ENCODE measurements at regions of chr5 and their contacts with region 1.

Region 1: DNA sequence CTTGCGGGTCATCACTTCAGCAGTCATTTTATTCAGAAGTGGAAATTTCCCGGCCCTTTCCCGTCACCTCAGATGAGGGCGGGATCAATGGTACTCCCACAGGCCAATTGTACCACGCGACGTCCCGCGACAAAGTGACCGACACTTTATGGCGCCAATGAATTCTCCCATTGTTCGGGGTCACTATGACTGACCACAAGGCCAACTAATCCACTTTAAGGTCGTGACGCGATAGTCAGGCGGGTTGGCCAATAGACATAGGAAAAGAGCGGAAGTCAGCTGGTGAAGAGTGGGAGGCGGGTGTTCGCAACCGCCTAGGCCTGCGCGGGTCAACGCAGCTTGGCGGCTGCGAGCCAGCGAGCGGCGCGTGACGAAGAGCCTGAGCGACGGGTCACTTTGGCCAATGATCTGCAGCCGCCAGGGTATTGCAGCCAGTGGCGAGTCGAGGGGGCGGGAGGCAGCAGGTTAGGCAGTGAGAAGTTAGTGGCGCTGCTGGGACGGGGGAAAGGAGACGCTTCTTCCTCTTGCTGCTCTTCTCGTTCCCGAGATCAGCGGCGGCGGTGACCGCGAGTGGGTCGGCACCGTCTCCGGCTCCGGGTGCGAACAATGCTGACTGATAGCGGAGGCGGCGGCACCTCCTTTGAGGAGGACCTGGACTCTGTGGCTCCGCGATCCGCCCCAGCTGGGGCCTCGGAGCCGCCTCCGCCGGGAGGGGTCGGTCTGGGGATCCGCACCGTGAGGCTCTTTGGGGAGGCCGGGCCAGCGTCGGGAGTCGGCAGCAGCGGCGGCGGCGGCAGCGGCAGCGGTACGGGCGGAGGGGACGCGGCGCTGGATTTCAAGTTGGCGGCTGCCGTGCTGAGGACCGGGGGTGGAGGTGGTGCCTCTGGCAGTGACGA is at the start of gene ANKHD1:
- DNase-seq: peak; percentile 99
- H3K4me3 Mint-ChIP-seq: no peak within 1 kb of the TSS
- H3K27ac Mint-ChIP-seq: no peak within 1 kb of the TSS
- H3K4me1 Mint-ChIP-seq: peaks cover 37% of the 10 kb centered on the region
- H3K27me3 Mint-ChIP-seq: no peaks in the 10 kb centered on the region
- total RNA-seq, gene ANKHD1: 83.2 to 87.0 TPM

Region 2: DNA sequence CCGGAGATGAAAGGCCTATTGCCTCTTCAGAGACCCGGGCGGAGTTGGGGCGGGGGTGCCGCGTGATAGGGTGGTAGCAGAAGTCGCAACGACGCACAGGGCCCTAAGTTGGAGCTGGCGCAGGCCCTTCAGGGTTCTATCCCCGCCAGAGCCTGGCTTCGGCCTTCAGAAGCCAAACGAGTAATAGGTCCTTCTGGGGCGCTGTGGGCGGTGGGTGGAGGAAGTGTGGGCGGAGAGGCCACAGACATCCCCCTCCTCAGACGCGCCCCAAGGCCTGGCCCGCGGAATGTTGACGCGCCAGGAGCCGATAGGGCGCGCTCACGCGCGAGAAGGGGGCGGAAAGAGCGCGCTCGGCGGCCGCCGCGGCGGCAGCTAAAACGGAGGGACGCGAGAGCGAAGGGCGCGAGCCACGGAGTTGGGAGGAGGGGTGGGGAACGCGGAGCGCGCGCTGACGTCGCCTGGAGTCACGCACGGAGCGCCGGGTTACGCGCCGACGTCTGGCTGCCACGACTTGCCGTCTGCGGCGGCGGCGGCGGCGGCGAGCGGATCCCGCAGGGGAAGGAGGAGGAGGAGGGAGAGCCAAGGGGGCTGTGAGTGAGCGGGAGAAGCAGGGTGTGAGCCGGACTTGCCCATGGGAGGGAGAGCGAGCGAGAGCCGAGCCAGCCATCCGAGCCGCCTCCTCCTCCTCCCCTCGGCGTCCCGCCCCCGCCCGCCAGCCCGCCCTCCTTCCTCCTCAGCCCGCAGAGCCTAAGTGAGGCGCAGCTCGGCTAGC is 294.1 kb before region 1 on chr5:
- CTCF ChIA-PET with region 1: no interaction called
- intact Hi-C with region 1: loop called (anchors 5 kb)
- DNase-seq: peak; percentile 91
- H3K4me3 Mint-ChIP-seq: peak overlapping the region; percentile 98
- H3K27ac Mint-ChIP-seq: peak overlapping the region; percentile 91
- H3K4me1 Mint-ChIP-seq: peaks cover 39% of the 10 kb centered on the region
- H3K27me3 Mint-ChIP-seq: no peaks in the 10 kb centered on the region

Region 3: DNA sequence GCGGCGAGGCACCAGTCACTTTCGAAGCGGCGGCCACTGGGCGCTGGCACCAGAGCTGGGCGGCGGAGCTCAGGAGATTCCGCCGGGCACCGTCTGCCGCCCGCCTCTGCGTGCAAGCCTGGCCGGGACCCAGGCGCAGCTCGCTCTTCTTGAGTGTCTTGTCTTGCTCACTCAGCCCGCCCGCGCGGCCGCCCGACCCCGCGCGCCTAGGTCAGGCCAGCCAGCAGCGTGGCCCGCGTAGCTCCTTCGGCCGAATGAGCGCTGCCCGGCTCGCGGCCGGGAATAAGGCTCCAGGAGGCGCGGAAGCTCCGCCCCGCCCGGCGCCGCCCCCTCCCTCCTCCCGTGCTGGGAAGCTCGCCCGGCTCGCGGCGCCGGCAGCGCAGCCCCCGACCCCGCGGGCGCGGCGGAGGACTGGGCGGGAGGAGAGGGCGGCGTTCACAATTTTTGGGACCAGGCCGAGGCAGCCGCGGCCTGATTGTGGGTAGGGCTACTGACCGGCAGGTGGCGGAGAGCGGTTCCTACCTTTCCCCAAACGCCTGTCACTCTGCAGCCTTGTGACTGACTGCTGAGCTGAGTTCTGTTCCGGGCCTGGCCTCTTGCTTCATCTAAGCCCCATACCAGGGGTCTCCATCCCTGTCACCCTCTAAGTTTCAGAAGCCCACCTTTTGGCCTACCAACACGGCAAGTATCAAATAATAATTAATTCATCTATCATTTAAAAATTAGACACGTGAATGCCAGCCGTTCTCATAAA is 55.1 kb before region 1 on chr5 and contains the start of gene HBEGF:
- CTCF ChIA-PET with region 1: no interaction called
- intact Hi-C with region 1: loop called (anchors 1 kb)
- DNase-seq: peak; percentile 61
- H3K4me3 Mint-ChIP-seq: peak within 1 kb of the TSS; percentile 75
- H3K27ac Mint-ChIP-seq: peak within 1 kb of the TSS; percentile 41
- H3K4me1 Mint-ChIP-seq: peaks cover 41% of the 10 kb centered on the region
- H3K27me3 Mint-ChIP-seq: peaks cover 7% of the 10 kb centered on the region
- total RNA-seq, gene HBEGF: 8.7 to 9.1 TPM

Region 4: DNA sequence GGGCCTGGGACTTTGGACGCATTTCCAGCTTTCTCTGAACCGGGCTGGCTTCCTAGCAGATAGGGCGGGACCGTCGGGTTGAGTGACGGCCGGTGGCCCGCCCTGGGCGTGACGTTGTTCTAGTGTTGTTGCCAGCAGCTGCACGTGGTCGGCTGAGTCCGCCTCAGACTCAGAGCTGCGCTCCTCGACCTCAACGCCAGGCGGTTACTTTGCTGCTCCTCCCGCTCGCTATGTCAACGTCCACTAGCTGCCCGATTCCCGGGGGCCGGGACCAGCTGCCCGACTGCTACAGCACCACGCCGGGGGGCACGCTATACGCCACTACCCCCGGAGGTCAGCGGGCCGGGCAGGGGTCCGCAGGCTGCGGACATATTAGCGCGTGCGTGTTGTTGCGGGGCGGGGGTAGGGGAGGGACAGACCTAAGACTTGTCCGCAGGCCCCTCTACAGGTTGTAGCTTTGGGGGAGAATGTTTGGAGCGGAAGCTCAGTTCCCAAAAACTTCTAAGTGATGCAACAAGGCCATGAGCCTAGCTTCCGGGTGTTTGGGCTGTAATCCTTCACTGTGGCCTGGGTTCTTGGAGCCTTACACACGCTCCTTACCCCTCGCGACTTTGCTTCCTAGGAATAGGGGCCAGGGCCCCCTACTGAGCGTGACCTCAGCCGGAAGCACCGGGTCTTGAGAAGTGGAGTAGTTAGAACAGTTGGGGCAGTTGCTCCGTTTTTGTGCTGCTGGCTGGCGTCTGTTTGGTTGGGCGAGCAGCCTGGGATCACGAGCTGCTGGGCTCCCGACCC is 146.1 kb after region 1 on chr5 and contains the start of gene EIF4EBP3:
- CTCF ChIA-PET with region 1: interaction called, 3 read pairs
- intact Hi-C with region 1: loop called (anchors 1 kb)
- DNase-seq: peak; percentile 93
- H3K4me3 Mint-ChIP-seq: peak within 1 kb of the TSS; percentile 87
- H3K27ac Mint-ChIP-seq: peak within 1 kb of the TSS; percentile 94
- H3K4me1 Mint-ChIP-seq: peaks cover 42% of the 10 kb centered on the region
- H3K27me3 Mint-ChIP-seq: no peaks in the 10 kb centered on the region
- total RNA-seq, gene EIF4EBP3: 27.2 to 28.5 TPM

Region 5: DNA sequence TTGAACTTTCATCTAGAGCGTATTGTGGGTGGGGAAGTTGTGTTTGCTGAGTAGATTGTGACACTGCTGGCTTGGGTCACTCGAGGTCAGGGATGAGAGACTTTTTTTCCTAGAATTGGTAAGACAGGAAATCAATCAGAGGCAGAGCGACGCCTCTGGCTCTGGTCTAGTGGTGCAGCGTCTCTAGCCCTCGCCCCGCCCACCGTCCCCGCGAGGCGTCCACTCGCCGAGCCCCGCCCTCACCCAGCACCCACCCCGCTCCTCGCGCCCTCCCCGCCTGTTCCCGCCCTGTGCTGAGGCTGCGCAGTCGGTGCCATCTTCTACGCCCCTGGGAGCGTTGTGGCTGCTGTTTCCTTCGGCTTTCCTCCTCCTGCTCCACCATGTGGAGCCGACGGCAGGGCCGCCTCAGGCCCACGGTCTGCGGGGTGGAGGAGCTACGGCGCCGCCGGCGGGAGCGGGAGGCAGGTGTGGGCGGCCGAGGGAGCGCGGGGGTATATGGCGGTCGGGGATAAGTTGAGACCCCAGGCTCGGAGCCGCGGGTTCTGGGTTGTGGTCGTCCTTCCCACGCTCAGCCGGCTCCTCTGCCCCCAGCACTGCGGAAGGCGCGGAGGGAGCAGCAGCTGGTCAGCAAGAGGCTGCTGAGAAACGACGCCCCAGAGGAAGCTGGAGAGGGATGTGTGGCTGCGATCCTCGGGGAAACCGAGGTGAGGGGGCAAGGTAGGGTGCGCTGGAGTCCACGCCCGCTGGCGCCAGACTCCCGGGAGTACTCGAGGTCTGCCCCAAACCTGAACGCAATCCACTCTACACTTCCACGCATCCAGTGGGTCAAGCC is 237.8 kb after region 1 on chr5 and contains the start of gene TMCO6:
- CTCF ChIA-PET with region 1: interaction called, 3 read pairs
- intact Hi-C with region 1: loop called (anchors 1 kb)
- DNase-seq: peak; percentile 99
- H3K4me3 Mint-ChIP-seq: peak within 1 kb of the TSS; percentile 82
- H3K27ac Mint-ChIP-seq: peak within 1 kb of the TSS; percentile 92
- H3K4me1 Mint-ChIP-seq: peaks cover 41% of the 10 kb centered on the region
- H3K27me3 Mint-ChIP-seq: no peaks in the 10 kb centered on the region
- total RNA-seq, gene TMCO6: 29.0 to 29.5 TPM

Region 6: DNA sequence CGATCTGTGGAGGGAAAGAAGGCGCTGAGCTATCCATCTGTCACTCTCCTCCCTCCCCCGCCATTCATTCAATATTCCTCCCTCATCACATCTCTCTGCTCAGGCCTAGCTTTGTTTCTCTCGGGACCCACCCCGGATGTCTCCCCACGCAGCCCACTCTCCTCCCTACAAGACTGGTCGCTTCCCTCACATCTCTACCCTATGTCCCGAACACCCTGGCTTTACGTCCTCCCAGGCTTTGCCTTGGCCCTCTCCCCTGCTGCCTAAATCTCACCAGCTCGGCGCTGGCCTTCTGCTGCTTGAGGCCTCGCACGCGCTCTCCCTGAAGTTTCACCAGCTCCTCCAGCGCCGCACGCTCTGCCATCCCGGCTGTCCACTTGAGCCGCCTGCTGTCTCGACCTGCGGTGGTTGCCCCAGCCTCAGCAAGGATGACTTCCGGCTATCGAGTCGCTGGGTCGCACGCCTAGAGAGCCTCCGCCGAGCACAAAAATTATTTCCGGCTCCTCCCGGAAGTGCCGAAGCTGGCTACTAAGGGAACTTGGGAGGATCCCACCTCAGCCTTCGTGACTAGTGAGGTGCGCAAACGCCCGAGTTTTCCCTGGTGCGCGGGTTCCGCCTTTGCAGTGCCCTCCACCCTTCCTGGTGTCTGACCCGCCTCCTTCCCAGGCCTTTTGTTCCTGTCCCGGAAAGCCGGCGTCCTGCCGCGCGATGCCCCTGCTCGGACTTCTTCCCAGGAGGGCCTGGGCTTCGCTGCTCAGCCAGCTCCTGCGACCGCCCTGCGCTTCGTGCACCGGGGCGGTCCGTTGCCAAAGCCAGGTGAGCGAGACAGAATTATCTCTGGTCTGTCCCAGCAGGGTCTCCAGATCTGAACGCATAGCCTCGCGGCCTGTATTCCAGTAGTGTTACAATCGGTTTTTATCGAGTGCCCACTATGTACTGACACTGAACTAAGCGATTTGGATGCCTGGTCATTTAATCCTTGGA is 289.6 kb after region 1 on chr5 and contains the starts of genes HARS1 and HARS2:
- CTCF ChIA-PET with region 1: no interaction called
- intact Hi-C with region 1: loop called (anchors 1 kb)
- DNase-seq: peak; percentile 92
- H3K4me3 Mint-ChIP-seq: peak within 1 kb of the TSS; percentile 100
- H3K27ac Mint-ChIP-seq: peak within 1 kb of the TSS; percentile 97
- H3K4me1 Mint-ChIP-seq: peaks cover 35% of the 10 kb centered on the region
- H3K27me3 Mint-ChIP-seq: no peaks in the 10 kb centered on the region
- total RNA-seq, gene HARS1: 69.0 to 74.8 TPM
- total RNA-seq, gene HARS2: 27.4 to 29.3 TPM

Region 7: GRCh38 chr5:141320225-141321169 is 918.9 kb after region 1 on chr5 and contains the start of gene TAF7:
- CTCF ChIA-PET with region 1: no interaction called
- intact Hi-C with region 1: loop called (anchors 1 kb)
- DNase-seq: peak; percentile 95
- H3K4me3 Mint-ChIP-seq: peak within 1 kb of the TSS; percentile 97
- H3K27ac Mint-ChIP-seq: peak within 1 kb of the TSS; percentile 99
- H3K4me1 Mint-ChIP-seq: peaks cover 25% of the 10 kb centered on the region
- H3K27me3 Mint-ChIP-seq: no peaks in the 10 kb centered on the region
- total RNA-seq, gene TAF7: 57.0 to 57.9 TPM